ENCODE measurements at regions of chr4 and their contacts with region 1.

Region 1: DNA sequence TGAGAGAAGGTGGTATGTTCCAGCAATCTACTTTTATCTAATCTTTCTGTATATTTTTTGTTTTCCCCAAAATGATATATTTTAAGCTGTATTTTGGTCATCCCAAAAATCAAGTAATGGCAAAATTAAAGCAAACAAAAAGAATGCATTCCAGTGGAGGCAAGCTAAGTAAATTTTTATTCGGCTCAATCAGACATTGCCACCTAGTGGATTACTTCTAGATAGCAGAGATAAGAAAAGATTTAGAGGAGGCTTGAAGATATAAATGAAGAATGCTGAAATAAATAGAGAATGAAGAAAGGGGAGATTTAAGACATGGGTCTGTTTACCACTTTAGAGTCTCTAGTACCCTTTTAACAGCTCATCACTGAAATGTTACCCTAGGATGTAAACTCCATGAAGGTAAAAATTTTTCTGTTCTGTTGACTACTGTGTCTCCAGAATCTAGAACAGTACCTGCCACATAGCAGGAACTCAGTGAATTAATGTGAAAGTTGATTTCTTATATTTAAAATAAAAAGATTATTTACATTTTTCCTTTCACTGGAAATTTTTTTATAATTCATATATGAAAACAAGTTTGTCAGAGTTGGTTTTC is 110.9 kb upstream of the ANK2 start:
- H3K4me3 Mint-ChIP-seq: no peak overlapping the region
- H3K27ac Mint-ChIP-seq: no peak overlapping the region
- H3K4me1 Mint-ChIP-seq: no peaks in the 10 kb centered on the region
- H3K27me3 Mint-ChIP-seq: no peaks in the 10 kb centered on the region

Region 2: DNA sequence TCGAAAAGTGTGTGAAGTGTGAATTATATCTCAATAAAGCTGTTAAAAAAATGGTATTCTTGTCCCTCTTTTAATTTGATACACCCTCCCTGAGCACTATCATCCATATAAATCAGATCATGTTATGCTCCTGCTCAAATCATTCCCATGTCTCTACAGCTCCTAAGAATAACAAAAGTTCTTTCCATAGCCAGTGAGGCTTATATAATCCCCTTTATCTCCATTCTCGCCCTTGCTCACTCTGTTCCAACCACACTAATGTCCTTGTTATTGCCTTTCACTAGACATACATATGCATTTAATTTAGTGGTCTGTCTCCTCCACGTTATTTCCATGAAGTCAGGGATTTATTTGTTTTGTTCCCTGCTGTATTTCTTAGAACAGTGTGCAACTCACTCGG is 312.3 kb before region 1 on chr4:
- intact Hi-C with region 1: loop called (anchors 10 kb)
- H3K4me3 Mint-ChIP-seq: no peak overlapping the region
- H3K27ac Mint-ChIP-seq: no peak overlapping the region
- H3K4me1 Mint-ChIP-seq: no peaks in the 10 kb centered on the region
- H3K27me3 Mint-ChIP-seq: no peaks in the 10 kb centered on the region

Region 3: DNA sequence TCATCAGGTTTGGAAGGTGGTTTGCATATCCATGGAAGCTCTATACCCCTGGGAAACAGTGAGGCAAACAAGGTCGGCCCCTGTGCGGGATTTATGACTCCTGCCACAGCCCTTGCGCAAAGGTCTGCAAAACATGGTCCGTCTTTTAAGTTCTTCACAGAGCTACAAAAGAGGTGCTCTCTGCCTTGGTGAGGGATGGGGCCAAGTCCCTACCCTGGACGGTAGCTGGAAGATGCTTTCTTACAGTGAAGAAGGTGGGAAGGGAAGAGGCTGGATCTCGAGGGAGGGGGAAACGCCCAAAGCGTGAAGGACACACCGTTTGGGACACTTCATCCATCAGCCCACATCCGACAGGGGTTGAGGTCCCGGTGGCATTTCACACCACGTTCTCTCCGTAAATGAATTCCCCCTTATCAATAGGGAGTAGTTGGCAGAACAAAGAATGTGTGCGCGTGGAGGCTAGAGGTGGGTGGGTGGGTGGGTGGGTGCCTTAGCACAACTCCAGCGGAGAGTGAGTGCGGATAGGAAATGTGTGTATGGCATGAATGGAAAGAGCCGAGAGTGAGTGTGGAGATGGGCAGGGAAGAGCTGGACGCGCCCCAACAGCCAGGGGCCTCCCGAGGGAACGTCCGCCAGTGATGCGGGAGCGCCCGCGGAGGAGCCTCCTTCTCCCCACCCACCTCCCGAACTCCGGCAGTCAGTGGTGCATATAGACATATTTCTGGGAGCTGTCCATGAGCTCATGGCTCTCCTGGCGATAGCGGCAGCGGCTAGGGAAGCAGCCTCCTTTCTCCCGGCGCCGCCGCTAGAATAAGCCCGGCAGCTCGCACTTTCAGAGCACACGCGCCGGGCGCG is 233.3 kb before region 1 on chr4:
- intact Hi-C with region 1: no loop called
- H3K4me3 Mint-ChIP-seq: peak overlapping the region; percentile 61
- H3K27ac Mint-ChIP-seq: no peak overlapping the region
- H3K4me1 Mint-ChIP-seq: peaks cover 14% of the 10 kb centered on the region
- H3K27me3 Mint-ChIP-seq: peaks cover 61% of the 10 kb centered on the region

Measured in dendritic cell treated with granulocyte-macrophage colony-stimulating factor and Interleukin-4, amounts not matched to agents 40 ng/mL and 50 ng/mL, for 4 days (primary cell).